ENCODE measurements at regions of chr1 and their contacts with region 1.

Region 1: DNA sequence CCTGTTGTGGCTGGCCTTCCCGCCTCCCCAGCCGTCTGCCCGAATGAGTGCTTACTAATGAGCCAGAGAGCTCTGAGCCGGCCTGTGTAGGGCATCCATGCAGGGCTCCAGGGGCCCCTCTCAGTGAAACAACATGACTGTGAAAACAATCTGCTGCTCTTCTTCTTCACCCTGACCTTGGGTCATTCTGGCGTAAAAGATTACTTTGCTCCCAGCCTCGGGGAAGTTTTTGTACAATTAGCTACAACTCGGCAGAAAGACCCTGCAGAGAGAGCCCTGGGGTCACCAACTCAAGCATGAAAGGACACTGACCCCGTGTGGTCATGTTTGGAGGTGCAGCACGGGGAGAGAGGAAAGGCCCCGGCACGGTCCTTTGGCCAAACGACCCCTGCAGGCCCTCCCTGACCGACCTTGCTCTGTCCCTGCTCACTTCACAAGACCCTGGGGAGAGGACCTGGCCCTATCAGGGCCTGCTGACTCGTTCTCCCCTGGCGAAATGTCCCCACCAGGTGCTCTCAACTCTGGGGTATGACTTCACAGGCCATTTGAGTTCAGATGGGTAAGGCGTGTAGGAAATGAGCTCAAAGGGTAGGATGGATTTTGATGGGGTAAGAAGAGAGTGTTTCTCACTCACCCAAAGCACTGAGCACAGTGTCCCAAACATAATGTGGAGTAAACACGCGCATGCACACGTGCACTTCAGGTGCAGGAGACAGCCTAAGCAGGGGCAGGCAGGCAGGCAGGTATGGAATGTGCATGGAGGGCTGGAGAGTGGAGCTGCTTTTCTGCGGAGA is 22.9 kb upstream of the FAM20B start:
- H3K4me3 Mint-ChIP-seq: no peak overlapping the region
- H3K27ac Mint-ChIP-seq: no peak overlapping the region
- H3K4me1 Mint-ChIP-seq: peaks cover 7% of the 10 kb centered on the region
- H3K27me3 Mint-ChIP-seq: no peaks in the 10 kb centered on the region

Region 2: DNA sequence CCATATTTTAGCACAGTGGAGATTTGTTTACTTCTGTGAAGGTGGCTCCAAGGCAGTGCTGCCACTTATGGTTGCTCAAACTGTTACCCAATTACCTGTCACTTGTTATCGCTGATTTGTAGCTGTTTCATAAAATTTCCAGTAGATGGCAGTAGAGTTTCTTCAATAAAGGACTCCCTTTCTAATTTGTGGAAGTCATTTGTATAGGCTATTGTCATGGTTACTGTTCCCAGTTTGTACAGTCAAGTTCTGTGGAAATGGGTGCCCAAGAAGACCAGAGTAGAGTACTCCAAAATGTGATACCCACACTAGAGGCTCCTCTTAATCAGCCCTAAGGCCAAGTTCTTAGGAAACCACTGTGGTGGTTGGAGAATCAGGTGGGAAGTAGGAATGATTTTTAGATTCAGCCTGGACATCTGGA is 692.1 kb before region 1 on chr1:
- intact Hi-C with region 1: loop called (anchors 2 kb)
- H3K4me3 Mint-ChIP-seq: no peak overlapping the region
- H3K27ac Mint-ChIP-seq: no peak overlapping the region
- H3K4me1 Mint-ChIP-seq: peaks cover 23% of the 10 kb centered on the region
- H3K27me3 Mint-ChIP-seq: no peaks in the 10 kb centered on the region

Region 3: DNA sequence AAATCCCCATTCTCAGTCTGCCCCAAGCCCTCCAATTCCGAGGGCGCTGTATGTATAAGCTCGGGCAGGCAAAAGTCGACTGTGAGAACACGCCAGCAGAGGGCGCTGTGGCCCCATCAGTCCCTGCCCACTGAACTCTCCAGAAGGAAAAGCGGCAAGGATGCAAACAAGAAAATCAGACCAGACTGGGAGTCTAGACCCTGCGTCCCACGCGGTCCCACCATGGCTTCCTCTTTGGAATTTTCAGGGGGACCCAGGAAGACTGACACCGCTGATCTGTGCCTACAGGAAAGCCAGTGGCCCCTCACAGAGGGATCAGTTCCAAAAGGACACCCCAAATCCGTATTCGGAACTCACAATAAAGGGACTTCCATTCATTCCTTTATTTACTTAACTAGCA is 470.4 kb before region 1 on chr1:
- intact Hi-C with region 1: loop called (anchors 1 kb)
- H3K4me3 Mint-ChIP-seq: no peak overlapping the region
- H3K27ac Mint-ChIP-seq: no peak overlapping the region
- H3K4me1 Mint-ChIP-seq: no peaks in the 10 kb centered on the region
- H3K27me3 Mint-ChIP-seq: no peaks in the 10 kb centered on the region

Region 4: DNA sequence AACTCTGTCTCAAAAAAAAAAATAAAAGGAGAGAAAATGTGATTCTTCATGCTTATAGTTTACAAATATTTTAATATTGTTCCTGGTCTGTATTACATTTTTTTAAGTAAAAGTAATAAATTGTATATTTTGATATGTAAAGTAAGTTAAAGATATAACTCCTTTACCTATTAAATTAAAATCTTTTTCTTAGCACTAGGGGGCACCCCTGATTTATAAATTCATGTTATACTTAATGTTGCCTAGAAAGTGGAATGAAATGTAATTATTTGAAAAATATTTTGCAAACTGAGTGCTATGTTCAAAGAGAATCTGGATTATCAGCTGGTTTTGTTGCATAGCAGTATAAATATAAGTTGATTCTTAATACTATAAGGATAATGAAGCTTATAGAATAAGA is 228.5 kb before region 1 on chr1:
- intact Hi-C with region 1: loop called (anchors 2 kb)
- H3K4me3 Mint-ChIP-seq: no peak overlapping the region
- H3K27ac Mint-ChIP-seq: no peak overlapping the region
- H3K4me1 Mint-ChIP-seq: no peaks in the 10 kb centered on the region
- H3K27me3 Mint-ChIP-seq: no peaks in the 10 kb centered on the region

Measured in dendritic cell treated with granulocyte-macrophage colony-stimulating factor and Interleukin-4, amounts not matched to agents 40 ng/mL and 50 ng/mL, for 4 days (primary cell).